SK-N-SH (cell line): ENCODE measurements at regions of chr22 and their contacts with region 1.

Region 1: GRCh38 chr22:32474635-32475467 is at the start of gene FBXO7:
- DNase-seq: peak; percentile 94
- H3K4me3 ChIP-seq: peak within 1 kb of the TSS; percentile 71 to 86
- H3K27ac ChIP-seq: peak within 1 kb of the TSS; percentile 93 to 95
- H3K4me1 ChIP-seq: peaks cover 12 to 23% of the 10 kb centered on the region in 2 experiments; a peak in 3 of 4 replicates
- H3K27me3 ChIP-seq: no peaks in the 10 kb centered on the region
- CTCF ChIP-seq: peak; percentile 49
- EP300 ChIP-seq: no peak
- RAD21 ChIP-seq: no peak
- polyA plus RNA-seq, gene FBXO7: 77.3 and 89.1 TPM in 2 replicates

Region 2: GRCh38 chr22:32202539-32203180 is 272.2 kb before region 1 on chr22:
- CTCF ChIA-PET with region 1: interaction called, 10 read pairs
- POLR2A ChIA-PET with region 1: interaction called, 4 read pairs
- DNase-seq: peak; percentile 78
- H3K4me3 ChIP-seq: peak overlapping the region; percentile 56 to 58
- H3K27ac ChIP-seq: no peak overlapping the region
- H3K4me1 ChIP-seq: peaks cover 0 to 38% of the 10 kb centered on the region in 2 experiments; a peak in 1 of 4 replicates
- H3K27me3 ChIP-seq: peaks cover 18% of the 10 kb centered on the region; the same call in 1 of the 2 replicates
- CTCF ChIP-seq: peak; percentile 64
- EP300 ChIP-seq: 0 out of 4 replicates have a peak, but pooled peaks of 1 of the 2 experiments have one; percentile 26
- RAD21 ChIP-seq: peak; percentile 65

Region 3: GRCh38 chr22:32411829-32412592 is 62.8 kb before region 1 on chr22 and contains the start of gene RTCB:
- CTCF ChIA-PET with region 1: interaction called, 75 read pairs
- POLR2A ChIA-PET with region 1: interaction called, 13 read pairs
- DNase-seq: peak; percentile 83
- H3K4me3 ChIP-seq: peak within 1 kb of the TSS; percentile 90 to 98
- H3K27ac ChIP-seq: peak within 1 kb of the TSS; percentile 59 to 76
- H3K4me1 ChIP-seq: peaks cover 0 to 10% of the 10 kb centered on the region in 2 experiments; a peak in 3 of 4 replicates
- H3K27me3 ChIP-seq: no peaks in the 10 kb centered on the region
- CTCF ChIP-seq: no peak
- EP300 ChIP-seq: 0 out of 4 replicates have a peak, but pooled peaks of 1 of the 2 experiments have one; percentile 11
- RAD21 ChIP-seq: no peak
- polyA plus RNA-seq, gene RTCB: 89.6 and 110 TPM in 2 replicates

Region 4: DNA sequence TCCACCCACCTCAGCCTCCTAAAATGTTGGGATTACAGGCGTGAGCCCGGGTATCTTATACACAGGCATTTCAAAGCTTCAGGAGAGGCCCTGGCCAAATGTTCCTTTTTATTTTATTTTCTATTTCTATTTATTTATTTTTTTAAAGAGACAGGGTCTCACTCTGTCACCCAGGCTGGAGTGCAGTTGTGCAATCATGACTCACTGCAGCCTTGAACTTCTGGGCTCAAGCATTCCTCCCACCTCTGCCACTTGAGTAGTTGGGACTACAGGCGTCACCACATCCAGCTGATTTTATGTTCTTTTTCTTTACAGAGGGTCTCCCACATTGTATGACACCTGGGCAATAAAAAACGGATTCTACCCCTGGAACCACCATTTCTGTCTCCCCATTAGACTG is 71.0 kb after region 1 on chr22:
- CTCF ChIA-PET with region 1: no interaction called
- POLR2A ChIA-PET with region 1: no interaction called
- DNase-seq: no peak
- H3K4me3 ChIP-seq: no peak overlapping the region
- H3K27ac ChIP-seq: no peak overlapping the region
- H3K4me1 ChIP-seq: no peaks in the 10 kb centered on the region
- H3K27me3 ChIP-seq: no peaks in the 10 kb centered on the region
- CTCF ChIP-seq: no peak
- EP300 ChIP-seq: no peak
- RAD21 ChIP-seq: no peak